Left ventricle myocardium inferior (tissue), 1 donor: ENCODE measurements at regions of chr7 and their contacts with region 1.

Region 1: GRCh38 chr7:151368136-151368571 is 26.5 kb downstream of the NUB1 start:
- DNase-seq: peak; percentile 79
- H3K4me3 ChIP-seq: no peak overlapping the region
- H3K27ac ChIP-seq: no peak overlapping the region
- H3K4me1 ChIP-seq: peaks cover 9% of the 10 kb centered on the region
- H3K27me3 ChIP-seq: no peaks in the 10 kb centered on the region
- CTCF ChIP-seq: peak; percentile 99

Region 2: DNA sequence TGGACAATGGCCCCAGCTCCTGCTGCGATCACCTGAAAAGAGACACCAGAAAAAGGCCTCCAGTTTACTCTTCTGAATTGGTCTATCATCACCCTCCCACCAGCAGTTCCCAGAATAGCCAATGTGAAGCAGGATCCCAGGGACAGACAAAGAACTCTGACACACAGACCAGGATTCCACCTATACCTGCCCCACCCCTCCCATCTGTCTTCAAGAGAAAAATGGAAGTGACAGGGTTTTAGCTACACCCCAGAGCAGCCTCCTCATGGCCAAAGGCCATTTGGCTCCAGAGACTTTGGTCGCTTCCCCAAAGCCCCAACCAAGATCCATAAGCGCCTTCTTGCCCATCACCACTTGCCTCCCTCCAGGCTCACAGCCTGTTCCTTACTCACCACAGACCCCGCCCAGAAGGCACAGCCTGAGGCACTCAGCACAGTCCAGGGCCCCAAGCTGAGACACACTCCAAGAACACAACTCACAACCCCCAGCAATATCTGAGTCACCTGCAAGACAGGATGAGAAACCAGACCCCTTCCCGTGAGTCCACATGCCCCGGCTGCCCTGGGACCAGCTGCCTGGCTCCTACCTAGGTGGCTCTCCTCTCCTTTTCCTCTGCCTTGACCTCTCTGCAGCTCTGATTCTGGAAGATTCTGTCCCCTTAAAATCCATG is 574.5 kb before region 1 on chr7:
- intact Hi-C with region 1: no loop called
- DNase-seq: no peak
- H3K4me3 ChIP-seq: no peak overlapping the region
- H3K27ac ChIP-seq: no peak overlapping the region
- H3K4me1 ChIP-seq: peaks cover 17% of the 10 kb centered on the region
- H3K27me3 ChIP-seq: peaks cover under 1% of the 10 kb centered on the region
- CTCF ChIP-seq: no peak

Region 3: DNA sequence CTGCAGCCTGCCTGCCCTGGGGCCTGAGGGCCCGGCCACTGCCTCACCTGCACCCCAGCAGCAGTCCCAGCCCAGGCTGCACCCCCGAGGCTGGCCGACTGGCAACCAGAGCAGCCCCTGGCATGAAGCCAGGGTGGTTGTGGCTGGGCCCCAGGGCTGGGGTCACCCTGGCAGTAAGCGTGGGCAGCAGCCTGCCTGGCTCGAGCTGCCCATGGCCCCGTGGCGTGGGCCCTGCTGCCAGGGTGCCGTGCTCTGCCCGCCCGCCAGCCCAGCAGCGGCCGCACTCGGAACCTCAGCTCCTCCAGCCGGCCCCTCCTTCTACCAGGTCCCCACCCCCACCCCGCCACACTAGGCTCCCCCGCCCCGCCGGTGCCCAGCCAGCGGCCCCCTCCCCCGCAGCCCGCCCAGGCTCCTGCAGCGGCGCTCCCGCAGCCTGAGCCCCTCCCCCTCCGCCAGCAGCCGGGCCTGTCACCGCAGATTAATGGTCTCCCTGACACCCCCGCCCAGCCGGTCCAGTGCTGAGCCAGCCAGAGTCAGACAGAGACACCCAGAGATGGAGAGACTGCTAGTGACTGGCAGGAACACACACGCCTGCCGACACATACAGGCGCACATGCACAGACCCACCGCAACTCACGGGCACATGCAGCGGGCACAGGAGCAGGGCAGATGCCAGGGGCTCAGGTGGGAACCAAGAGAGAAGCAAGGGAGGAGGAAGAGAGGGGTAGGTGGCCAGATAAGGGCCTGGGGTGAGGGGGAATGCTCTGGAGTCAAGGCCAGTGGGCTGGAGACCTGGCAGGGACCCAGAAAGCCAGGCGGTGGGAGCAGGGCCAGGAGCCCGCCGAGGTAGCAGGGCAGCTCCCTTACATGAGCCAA is 412.4 kb before region 1 on chr7:
- intact Hi-C with region 1: no loop called
- DNase-seq: peak; percentile 68
- H3K4me3 ChIP-seq: peak overlapping the region; percentile 27
- H3K27ac ChIP-seq: peak overlapping the region; percentile 96
- H3K4me1 ChIP-seq: peaks cover 81% of the 10 kb centered on the region
- H3K27me3 ChIP-seq: peaks cover 72% of the 10 kb centered on the region
- CTCF ChIP-seq: peak; percentile 21

Region 4: GRCh38 chr7:151448261-151449252 is 80.4 kb after region 1 on chr7:
- intact Hi-C with region 1: loop called (anchors 10 kb)
- DNase-seq: peak; percentile 65
- H3K4me3 ChIP-seq: peak overlapping the region; percentile 72
- H3K27ac ChIP-seq: peak overlapping the region; percentile 46
- H3K4me1 ChIP-seq: peaks cover 10% of the 10 kb centered on the region
- H3K27me3 ChIP-seq: no peaks in the 10 kb centered on the region
- CTCF ChIP-seq: peak; percentile 87

Region 5: DNA sequence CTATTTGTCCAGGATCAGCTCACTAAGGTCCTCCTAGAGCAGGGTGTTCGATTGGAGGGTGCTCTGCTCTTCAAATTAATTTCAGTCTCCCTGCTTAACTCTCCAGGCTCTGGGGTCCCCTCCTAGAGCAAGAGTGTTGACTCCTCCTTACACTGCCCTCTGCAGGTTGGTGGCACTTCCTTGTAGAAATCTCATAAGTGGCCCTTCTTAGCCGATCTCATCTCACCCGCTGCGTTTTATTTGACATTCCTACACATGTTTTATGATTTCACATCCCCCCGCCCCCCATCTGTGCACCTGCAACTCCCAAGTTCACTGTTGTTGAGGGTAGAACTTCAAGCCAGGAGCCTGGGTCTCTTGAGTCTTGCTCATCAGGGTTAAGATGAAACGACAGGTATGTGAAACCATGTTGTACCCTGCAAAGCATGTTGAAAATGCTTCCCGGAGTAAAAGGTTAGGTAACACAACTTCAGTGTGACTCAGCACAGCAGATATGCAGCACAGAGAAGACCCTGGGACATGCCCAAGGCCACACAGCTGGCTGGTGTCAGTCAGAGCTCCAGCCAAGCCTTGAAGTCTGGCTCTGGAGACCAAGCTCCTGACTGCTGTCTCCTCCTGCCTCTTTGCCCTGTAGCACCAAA is 337.6 kb after region 1 on chr7:
- intact Hi-C with region 1: no loop called
- DNase-seq: peak; percentile 15
- H3K4me3 ChIP-seq: peak overlapping the region; percentile 24
- H3K27ac ChIP-seq: peak overlapping the region; percentile 36
- H3K4me1 ChIP-seq: peaks cover 53% of the 10 kb centered on the region
- H3K27me3 ChIP-seq: no peaks in the 10 kb centered on the region
- CTCF ChIP-seq: peak; percentile 65

Region 6: DNA sequence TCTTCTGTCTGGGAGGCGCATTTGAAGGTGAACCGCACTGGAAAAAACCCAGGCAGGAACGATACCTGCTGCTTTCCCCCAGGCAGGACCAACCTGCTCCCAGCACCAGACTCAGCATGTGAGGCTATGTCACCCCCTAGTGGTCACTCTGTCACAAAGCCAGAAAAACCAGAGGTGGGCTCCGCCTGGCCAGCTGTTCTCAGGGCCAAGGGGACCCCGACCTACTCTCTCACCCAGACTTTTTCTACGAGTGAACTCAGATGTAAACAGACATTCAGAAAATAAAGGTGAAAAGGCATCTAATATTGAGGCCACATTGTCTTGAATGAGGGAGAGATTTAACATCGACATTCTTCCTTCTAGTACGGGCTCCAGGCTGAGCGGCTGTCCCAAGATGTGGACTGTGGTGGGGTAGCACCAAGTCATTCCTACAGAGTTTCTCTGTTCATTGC is 391.5 kb after region 1 on chr7:
- intact Hi-C with region 1: loop called (anchors 10 kb)
- DNase-seq: peak; percentile 43
- H3K4me3 ChIP-seq: no peak overlapping the region
- H3K27ac ChIP-seq: no peak overlapping the region
- H3K4me1 ChIP-seq: peaks cover 38% of the 10 kb centered on the region
- H3K27me3 ChIP-seq: no peaks in the 10 kb centered on the region
- CTCF ChIP-seq: peak; percentile 93

Region 7: DNA sequence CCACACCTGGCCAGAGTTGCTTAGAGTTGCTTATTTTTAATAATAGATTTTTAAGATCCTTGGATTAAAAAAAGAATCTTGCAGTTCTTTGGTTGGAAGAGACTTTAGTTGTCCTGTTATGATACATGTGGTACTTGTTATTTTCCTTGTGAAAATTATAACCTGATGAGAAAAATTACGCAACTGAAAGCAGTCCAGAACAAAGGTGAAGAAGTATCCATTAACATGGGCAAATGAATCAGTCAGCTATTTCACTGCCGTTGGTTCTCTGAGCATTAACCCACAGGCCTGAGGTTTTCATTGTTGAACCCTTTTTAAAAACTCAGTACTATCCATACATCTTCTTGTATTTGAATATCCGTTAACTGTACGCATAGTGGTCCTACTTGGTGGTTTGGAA is 725.6 kb after region 1 on chr7:
- intact Hi-C with region 1: no loop called
- DNase-seq: no peak
- H3K4me3 ChIP-seq: no peak overlapping the region
- H3K27ac ChIP-seq: no peak overlapping the region
- H3K4me1 ChIP-seq: no peaks in the 10 kb centered on the region
- H3K27me3 ChIP-seq: no peaks in the 10 kb centered on the region
- CTCF ChIP-seq: no peak